ENCODE measurements at regions of chr16 and their contacts with region 1.

Region 1: DNA sequence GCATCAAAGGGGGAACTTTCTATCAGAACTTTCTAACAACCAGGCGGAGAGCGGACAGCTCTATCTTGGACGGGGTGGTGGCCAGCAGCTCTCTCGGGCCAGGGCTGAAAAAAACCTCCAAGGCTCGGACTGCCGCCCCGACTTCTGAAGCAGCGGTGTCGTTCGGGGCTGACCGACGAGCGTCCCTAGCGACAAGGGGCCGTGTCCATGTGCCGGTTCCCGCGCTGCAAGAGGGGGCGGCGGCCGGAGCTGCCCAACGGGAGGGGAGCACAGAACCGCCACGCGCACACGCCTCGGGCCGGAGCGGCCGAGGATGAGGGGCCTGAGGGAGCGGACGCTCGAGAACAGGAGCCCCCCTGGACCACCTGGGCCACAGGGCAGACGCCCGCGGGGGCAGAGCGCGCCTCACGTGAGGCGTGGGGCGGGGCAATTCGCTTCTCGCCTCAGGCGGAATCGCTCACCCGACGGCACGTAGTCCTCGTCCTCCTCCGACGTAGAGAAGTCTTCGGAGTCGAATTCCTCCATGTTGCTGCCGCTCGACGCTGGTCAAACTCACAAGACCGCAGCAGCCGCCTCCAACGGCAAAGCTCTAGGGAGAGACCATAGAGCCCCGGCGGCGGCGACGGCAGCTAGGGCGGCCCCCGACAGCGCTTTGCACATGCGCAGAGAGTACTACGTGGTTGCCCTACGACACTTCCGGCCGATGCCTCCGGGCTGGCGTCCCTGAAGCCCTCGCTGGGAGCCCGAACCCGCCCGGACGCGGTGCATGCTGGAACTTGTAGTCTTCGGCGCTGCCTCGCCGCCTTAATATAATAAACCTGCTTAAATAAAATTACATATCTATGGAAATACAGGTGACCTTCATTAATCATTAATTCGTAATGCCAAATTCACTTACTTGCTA is at the start of gene CFDP1:
- DNase-seq: peak; percentile 95 to 98
- ATAC-seq: peak; percentile 98
- H3K4me3 ChIP-seq: peak within 1 kb of the TSS; percentile 99
- H3K27ac ChIP-seq: peak within 1 kb of the TSS; percentile 96
- H3K4me1 ChIP-seq: peaks cover 2% of the 10 kb centered on the region
- H3K27me3 ChIP-seq: no peaks in the 10 kb centered on the region
- CTCF ChIP-seq: no peak
- total RNA-seq, gene CFDP1: 16.6 to 21.9 (median 19.6) TPM

Region 2: DNA sequence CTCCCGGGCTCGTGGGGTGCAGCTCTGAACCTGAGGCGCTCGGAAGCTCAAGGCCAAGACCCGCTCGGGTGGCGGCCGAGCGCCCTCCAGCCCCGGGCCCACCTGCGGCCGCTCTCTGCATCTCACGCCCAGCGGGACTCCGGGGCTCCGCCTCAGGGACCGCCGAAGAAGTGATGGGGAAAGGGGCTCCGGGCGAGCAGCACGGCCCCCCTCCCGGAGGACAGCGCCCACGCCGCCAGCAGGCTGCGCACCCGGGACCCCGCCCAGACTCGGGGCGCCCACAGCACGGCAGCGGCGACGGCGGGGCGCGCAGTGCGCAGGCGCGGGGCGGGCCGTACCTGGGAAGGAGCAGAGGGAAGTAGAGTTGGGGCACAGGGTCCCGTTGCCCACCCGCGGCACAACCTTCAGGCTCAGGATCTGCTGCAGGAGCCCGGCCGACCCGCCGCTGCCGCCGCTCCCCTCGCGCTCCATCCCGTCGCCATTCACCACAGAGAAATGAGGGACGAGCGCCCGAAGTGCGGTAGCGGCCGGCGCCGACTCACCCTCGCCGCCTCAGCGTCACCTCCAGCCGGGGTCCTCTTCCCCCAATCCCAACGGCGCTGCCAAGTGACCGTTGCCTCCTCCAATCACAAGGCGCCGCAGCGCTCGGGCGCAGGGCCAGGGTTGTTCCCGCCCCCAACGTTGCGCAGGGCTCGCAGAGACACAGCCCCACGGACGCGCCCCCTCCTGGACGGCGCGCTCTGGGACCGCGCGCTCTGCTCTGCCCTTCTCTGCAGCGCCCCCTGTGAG is 31.2 kb after region 1 on chr16 and contains the start of gene TMEM170A:
- intact Hi-C with region 1: loop called in 1 of 2 experiments (anchors 1 kb)
- DNase-seq: peak; percentile 100
- ATAC-seq: peak; percentile 97 to 99 (median 98)
- H3K4me3 ChIP-seq: peak within 1 kb of the TSS; percentile 86
- H3K27ac ChIP-seq: peak within 1 kb of the TSS; percentile 95
- H3K4me1 ChIP-seq: peaks cover 15% of the 10 kb centered on the region
- H3K27me3 ChIP-seq: no peaks in the 10 kb centered on the region
- CTCF ChIP-seq: peak; percentile 100
- total RNA-seq, gene TMEM170A: 5.9 to 7.9 (median 7.0) TPM

Region 3: GRCh38 chr16:75483222-75483621 is 50.1 kb after region 1 on chr16:
- intact Hi-C with region 1: no loop called
- DNase-seq: no peak
- ATAC-seq: peak; percentile 78 to 91 (median 84)
- H3K4me3 ChIP-seq: no peak overlapping the region
- H3K27ac ChIP-seq: peak overlapping the region; percentile 42
- H3K4me1 ChIP-seq: peaks cover 4% of the 10 kb centered on the region
- H3K27me3 ChIP-seq: no peaks in the 10 kb centered on the region
- CTCF ChIP-seq: no peak

Region 4: GRCh38 chr16:75695704-75696103 is 262.6 kb after region 1 on chr16:
- intact Hi-C with region 1: no loop called
- DNase-seq: no peak
- ATAC-seq: no peak
- H3K4me3 ChIP-seq: no peak overlapping the region
- H3K27ac ChIP-seq: no peak overlapping the region
- H3K4me1 ChIP-seq: no peaks in the 10 kb centered on the region
- H3K27me3 ChIP-seq: no peaks in the 10 kb centered on the region
- CTCF ChIP-seq: no peak